ENCODE measurements at regions of chr11 and their contacts with region 1.

Region 1: GRCh38 chr11:117159892-117160291 is 15.8 kb downstream of the PAFAH1B2 start:
- DNase-seq: no peak
- ATAC-seq: no peak
- H3K4me3 ChIP-seq: no peak overlapping the region
- H3K4me3 Mint-ChIP-seq: no peak overlapping the region
- H3K27ac ChIP-seq: peak overlapping the region; percentile 29
- H3K27ac Mint-ChIP-seq: peak overlapping the region in 4 of 9 donors; percentile 33 to 64 (median 40)
- H3K4me1 ChIP-seq: no peaks in the 10 kb centered on the region
- H3K4me1 Mint-ChIP-seq: peaks cover 0 to 30% (median 22%) of the 10 kb centered on the region in 7 donors
- H3K27me3 ChIP-seq: no peaks in the 10 kb centered on the region
- H3K27me3 Mint-ChIP-seq: no peaks in the 10 kb centered on the region

Region 2: GRCh38 chr11:117171404-117172061 is 11.6 kb after region 1 on chr11:
- CTCF ChIA-PET with region 1: no interaction called
- POLR2A ChIA-PET with region 1: interaction called, 3 read pairs
- intact Hi-C with region 1: loop called in 1 of 2 experiments (anchors 2 kb)
- DNase-seq: no peak
- ATAC-seq: no peak
- H3K4me3 ChIP-seq: no peak overlapping the region
- H3K4me3 Mint-ChIP-seq: no peak overlapping the region
- H3K27ac ChIP-seq: no peak overlapping the region
- H3K27ac Mint-ChIP-seq: peak overlapping the region in 8 of 9 donors; percentile 29 to 66 (median 50)
- H3K4me1 ChIP-seq: no peaks in the 10 kb centered on the region
- H3K4me1 Mint-ChIP-seq: peaks cover 0 to 17% (median 5%) of the 10 kb centered on the region in 7 donors
- H3K27me3 ChIP-seq: no peaks in the 10 kb centered on the region
- H3K27me3 Mint-ChIP-seq: no peaks in the 10 kb centered on the region